SK-N-SH (cell line): ENCODE measurements at regions of chr2 and their contacts with region 1.

Region 1: DNA sequence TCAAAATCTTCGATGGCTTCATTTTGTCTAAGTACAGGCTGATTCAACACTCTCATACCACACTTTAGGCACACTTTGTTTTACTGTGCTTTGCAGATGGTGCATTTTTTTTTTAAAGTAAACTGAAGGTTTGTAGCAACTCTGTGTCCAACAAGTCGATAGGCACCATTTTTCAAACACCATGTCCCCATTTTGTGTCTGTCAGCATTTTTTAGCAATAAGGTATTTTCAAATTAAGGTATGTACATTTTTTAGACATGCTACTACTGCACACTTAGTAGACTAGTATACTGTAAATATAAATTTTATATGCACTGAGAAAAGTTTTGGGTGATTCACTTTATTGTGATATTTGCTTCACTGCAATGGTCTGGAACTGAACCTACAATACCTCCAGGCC is 44.4 kb downstream of the ORC4 start:
- DNase-seq: no peak
- H3K4me3 ChIP-seq: no peak overlapping the region
- H3K27ac ChIP-seq: no peak overlapping the region
- H3K4me1 ChIP-seq: no peaks in the 10 kb centered on the region; a peak in 2 of 4 replicates
- H3K27me3 ChIP-seq: no peaks in the 10 kb centered on the region
- CTCF ChIP-seq: no peak
- EP300 ChIP-seq: no peak
- RAD21 ChIP-seq: no peak

Region 2: DNA sequence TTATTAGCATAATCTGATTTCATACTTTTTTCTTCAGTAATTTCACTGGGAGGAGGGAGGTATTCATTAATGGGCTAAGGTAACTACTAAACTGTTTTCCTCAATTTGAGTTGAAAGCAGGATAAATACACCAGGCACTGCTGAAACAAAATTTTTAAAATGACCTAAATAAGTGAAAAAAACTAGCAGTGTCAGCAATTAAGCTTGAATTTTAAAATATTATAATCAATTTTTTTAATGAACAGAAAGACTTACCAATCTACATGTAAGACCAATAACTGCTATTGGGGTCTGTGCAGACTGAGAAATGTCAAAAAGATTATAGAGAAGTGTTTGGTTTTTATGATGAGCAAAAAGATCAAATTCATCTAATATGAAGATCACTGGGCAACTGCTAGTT is 24.0 kb before region 1 on chr2:
- CTCF ChIA-PET with region 1: no interaction called
- POLR2A ChIA-PET with region 1: no interaction called
- DNase-seq: no peak
- H3K4me3 ChIP-seq: no peak overlapping the region
- H3K27ac ChIP-seq: no peak overlapping the region
- H3K4me1 ChIP-seq: no peaks in the 10 kb centered on the region
- H3K27me3 ChIP-seq: no peaks in the 10 kb centered on the region
- CTCF ChIP-seq: no peak
- EP300 ChIP-seq: no peak
- RAD21 ChIP-seq: no peak

Region 3: GRCh38 chr2:147989809-147990403 is 13.8 kb after region 1 on chr2:
- CTCF ChIA-PET with region 1: interaction called, 11 read pairs
- POLR2A ChIA-PET with region 1: interaction called, 3 read pairs
- DNase-seq: peak; percentile 39
- H3K4me3 ChIP-seq: no peak overlapping the region
- H3K27ac ChIP-seq: no peak overlapping the region
- H3K4me1 ChIP-seq: no peaks in the 10 kb centered on the region
- H3K27me3 ChIP-seq: no peaks in the 10 kb centered on the region
- CTCF ChIP-seq: peak; percentile 92
- EP300 ChIP-seq: no peak
- RAD21 ChIP-seq: peak; percentile 89

Region 4: GRCh38 chr2:148006249-148007007 is 30.3 kb after region 1 on chr2:
- CTCF ChIA-PET with region 1: no interaction called
- POLR2A ChIA-PET with region 1: no interaction called
- DNase-seq: no peak
- H3K4me3 ChIP-seq: no peak overlapping the region
- H3K27ac ChIP-seq: no peak overlapping the region
- H3K4me1 ChIP-seq: no peaks in the 10 kb centered on the region
- H3K27me3 ChIP-seq: no peaks in the 10 kb centered on the region
- CTCF ChIP-seq: no peak
- EP300 ChIP-seq: no peak
- RAD21 ChIP-seq: no peak